Activated CD4-positive, alpha-beta T cell treated with anti-CD3 and anti-CD28 coated beads, Interleukin-2, amount 10 ng/mL, durations not matched to agents 24 days and 14 days (primary cell): ENCODE measurements at regions of chr5 and their contacts with region 1.

Region 1: GRCh38 chr5:55903121-55903701 is 52.1 kb downstream of the IL31RA start:
- DNase-seq: peak; percentile 93
- H3K4me3 Mint-ChIP-seq: peak overlapping the region; percentile 67
- H3K27ac Mint-ChIP-seq: peak overlapping the region; percentile 67
- H3K4me1 Mint-ChIP-seq: peaks cover 44% of the 10 kb centered on the region
- H3K27me3 Mint-ChIP-seq: no peaks in the 10 kb centered on the region

Region 2: GRCh38 chr5:55338810-55339243 is 564.4 kb before region 1 on chr5:
- intact Hi-C with region 1: loop called (anchors 10 kb)
- DNase-seq: peak; percentile 64
- H3K4me3 Mint-ChIP-seq: peak overlapping the region; percentile 55
- H3K27ac Mint-ChIP-seq: peak overlapping the region; percentile 85
- H3K4me1 Mint-ChIP-seq: peaks cover 20% of the 10 kb centered on the region
- H3K27me3 Mint-ChIP-seq: no peaks in the 10 kb centered on the region

Region 3: GRCh38 chr5:55711968-55712859 is 191.0 kb before region 1 on chr5 and contains the start of gene SLC38A9:
- intact Hi-C with region 1: loop called (anchors 5 kb)
- DNase-seq: peak; percentile 98
- H3K4me3 Mint-ChIP-seq: peak within 1 kb of the TSS; percentile 97
- H3K27ac Mint-ChIP-seq: peak within 1 kb of the TSS; percentile 90
- H3K4me1 Mint-ChIP-seq: peaks cover 28% of the 10 kb centered on the region
- H3K27me3 Mint-ChIP-seq: no peaks in the 10 kb centered on the region
- total RNA-seq, gene SLC38A9: 20.5 and 21.4 TPM in 2 replicates

Region 4: GRCh38 chr5:55763746-55764420 is 139.3 kb before region 1 on chr5:
- intact Hi-C with region 1: loop called (anchors 5 kb)
- DNase-seq: peak; percentile 67
- H3K4me3 Mint-ChIP-seq: peak overlapping the region; percentile 45
- H3K27ac Mint-ChIP-seq: peak overlapping the region; percentile 31
- H3K4me1 Mint-ChIP-seq: peaks cover 32% of the 10 kb centered on the region
- H3K27me3 Mint-ChIP-seq: no peaks in the 10 kb centered on the region

Region 5: GRCh38 chr5:55856516-55857246 is 46.5 kb before region 1 on chr5:
- intact Hi-C with region 1: loop called (anchors 2 kb)
- DNase-seq: peak; percentile 79
- H3K4me3 Mint-ChIP-seq: peak overlapping the region; percentile 41
- H3K27ac Mint-ChIP-seq: peak overlapping the region; percentile 75
- H3K4me1 Mint-ChIP-seq: peaks cover 50% of the 10 kb centered on the region
- H3K27me3 Mint-ChIP-seq: no peaks in the 10 kb centered on the region

Region 6: GRCh38 chr5:55868846-55869245 is 34.4 kb before region 1 on chr5:
- intact Hi-C with region 1: loop called (anchors 2 kb)
- DNase-seq: peak; percentile 70
- H3K4me3 Mint-ChIP-seq: no peak overlapping the region
- H3K27ac Mint-ChIP-seq: peak overlapping the region; percentile 69
- H3K4me1 Mint-ChIP-seq: peaks cover 21% of the 10 kb centered on the region
- H3K27me3 Mint-ChIP-seq: no peaks in the 10 kb centered on the region